Posterior cingulate gyrus (tissue), 11 donors: ENCODE measurements at regions of chr14 and their contacts with region 1.

Region 1: DNA sequence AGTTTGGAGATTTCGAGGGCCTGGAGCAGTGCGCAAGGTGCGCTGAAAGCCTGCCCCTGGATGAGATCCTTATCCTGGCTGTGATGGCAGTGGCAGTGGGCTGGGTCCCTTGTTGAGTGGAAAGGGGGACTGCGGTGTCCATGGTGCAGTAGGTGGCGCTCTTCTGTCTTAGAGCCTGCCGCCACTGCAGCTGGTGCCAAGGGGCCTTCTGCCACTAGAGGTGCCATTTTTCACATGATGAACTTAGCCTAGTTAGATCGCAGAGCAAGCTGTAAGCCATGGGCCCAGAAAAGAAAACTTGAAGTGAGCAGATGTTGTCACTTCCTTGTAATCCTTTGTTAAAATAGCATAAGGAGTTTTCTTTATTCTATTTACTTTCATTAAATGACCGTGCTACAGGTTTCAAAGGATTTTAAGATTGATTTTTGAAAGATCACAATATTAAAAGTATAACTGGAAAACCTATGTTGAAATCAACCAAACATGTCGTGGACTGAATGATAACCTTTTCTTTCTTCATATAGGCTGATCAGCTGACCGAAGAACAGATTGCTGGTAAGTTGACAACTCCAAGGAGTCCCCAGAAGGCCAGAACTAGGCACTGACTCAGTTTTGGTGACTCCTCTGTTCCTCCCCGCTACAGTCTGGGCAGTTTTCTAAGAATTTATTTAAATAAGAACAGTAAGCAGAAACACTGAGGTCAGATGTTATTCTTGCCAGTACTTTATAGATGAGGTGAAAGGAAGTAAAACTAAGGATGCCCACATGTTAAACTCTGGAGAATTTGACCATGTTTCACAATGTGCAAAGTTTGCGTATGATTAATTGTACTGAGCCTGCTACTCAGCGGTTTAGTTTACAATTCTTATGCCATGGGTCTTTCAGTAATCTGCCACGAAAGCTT is 3.0 kb downstream of the CALM1 start:
- DNase-seq: peak; percentile 84 to 98 (median 90)

Region 2: DNA sequence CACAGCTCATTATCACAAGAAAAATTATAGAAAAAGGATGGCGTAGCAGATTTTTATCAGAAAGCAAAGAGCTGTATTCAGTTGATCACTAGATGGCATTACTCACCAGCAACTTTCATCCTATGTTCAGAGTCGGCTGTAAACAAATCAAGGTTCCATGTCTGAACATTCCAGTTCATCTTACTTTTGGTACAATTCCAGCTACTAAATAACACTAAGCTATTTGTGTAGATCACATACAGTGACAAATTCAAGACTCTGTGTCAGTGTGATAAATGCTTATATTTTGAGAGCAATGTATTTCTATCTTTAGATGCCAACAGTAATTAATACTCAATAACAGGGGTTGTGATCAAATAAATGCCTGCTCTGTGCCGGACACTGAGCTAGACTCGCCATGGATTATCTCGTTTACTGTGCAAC is 98.1 kb before region 1 on chr14:
- intact Hi-C with region 1: loop called (anchors 5 kb)
- DNase-seq: no peak

Region 3: GRCh38 chr14:90383075-90383730 is 16.6 kb before region 1 on chr14:
- intact Hi-C with region 1: loop called (anchors 1 kb)
- DNase-seq: peak; percentile 98 to 100 (median 99)

Region 4: DNA sequence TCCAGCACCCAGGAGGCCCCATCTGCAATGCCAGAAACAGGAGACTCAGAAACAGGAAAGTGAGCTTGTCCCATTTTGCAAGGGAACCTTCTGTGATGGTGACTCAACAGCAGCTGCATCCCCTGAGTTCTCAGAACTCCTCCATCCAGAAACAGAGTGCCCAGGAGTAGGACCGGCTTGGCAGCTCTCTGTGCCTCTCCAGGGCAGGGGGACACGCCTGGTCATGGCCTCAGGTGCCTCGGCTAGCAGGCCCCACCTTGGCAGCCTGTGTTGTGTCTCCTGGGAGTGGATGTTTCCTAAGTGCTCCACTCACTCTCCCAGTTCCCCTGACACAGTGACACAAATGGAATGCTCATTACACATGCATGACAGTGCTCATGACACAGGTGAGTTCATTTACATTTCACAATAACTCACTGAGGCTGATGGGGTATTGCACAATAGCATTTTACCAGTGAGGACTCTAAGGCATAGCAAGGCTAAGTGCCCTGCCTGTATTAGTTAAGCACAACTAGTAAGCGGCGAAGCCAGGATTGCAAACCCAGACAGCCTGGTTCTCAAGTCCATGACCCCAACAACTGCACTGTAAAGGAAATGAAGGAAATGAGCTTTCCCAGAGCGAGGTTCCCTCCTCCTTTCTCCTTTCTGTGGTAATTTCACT is 44.4 kb after region 1 on chr14:
- intact Hi-C with region 1: no loop called
- DNase-seq: peak in 2 of 10 donors; percentile 15 to 64

Region 5: DNA sequence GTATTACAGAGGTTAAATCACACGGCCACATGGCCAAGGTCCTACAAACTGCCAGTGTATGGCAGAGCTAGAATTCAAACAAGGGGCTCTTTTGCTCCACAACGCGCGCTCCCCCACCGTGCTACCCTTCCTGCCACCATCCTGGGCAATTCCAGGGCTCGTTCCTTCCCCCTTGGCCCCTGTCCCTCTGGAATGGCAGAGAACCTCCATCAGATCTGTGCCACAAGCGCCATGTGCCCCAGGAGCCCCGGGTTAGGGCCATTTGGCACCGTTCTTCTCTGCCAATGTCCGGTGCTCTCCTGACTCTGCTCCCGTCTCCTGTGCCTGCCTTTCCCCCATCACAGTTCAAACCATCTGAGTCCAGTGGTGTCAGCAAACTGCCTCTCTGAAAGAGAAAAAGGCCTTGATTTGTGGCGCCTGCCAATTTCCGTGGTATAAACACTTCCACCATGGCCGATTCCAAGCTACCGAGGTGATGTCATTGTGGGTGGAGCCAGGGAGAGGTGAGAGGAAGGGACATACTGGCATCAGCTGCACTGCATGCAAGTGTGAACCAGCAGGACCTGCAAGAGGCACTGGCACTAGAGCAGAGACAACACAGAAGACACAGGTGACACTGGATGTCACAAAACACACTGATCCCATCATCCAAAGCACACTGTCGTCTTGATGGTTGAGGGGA is 160.2 kb after region 1 on chr14:
- intact Hi-C with region 1: loop called (anchors 5 kb)
- DNase-seq: peak in 3 of 10 donors; percentile 52 to 72 (median 72)

Region 6: GRCh38 chr14:90630171-90630806 is 230.5 kb after region 1 on chr14:
- intact Hi-C with region 1: no loop called
- DNase-seq: no peak

Region 7: DNA sequence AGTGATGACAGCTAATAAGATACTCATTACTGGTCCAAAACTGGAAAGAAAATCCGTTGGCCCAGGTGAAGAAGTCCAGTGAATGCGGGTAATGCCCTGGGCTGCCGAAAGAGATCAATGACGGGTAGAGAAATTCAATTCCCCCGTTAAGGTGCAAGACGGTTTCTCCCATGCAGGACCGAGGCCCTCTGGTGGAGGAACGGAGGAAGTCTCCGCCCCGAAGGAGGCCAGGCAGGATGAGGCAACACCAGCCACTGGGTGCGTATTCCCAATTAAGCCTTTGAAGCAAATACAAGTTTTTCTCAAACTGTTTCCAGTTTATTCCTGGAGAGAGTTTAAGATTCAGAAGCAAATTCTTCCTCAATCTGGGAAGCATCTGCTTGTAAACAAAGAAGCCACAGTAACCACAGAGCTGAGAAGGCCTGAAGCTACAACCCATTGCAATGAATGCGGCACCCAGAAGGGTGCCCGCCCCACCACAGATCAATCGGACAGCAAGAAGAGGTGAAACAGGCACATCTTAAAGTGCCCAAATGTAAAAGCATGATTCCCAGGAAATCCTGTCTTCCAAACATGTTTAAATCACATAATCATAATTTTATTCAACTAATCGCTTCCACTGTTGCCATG is 297.9 kb after region 1 on chr14:
- intact Hi-C with region 1: loop called (anchors 1 kb)
- DNase-seq: peak; percentile 82 to 98 (median 91)

Region 8: DNA sequence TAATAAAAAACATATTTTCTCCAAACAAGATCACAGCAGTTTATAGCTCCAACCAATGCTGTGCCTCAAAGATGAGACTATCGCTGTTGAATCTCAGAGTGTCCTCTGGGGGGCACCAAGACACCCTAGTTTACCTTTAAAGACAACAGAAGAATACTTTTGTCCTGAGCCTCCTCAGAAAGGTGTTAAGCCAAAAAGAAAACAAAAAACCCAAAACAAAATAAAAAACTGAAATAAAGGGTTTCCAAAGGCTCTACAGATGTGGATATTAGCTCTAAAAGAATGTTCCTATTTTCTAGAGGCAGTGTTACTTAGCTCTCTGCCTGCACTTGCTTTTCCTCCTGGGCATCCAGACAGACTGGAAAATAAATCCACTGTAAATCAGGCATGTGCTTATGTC is 503.3 kb after region 1 on chr14:
- intact Hi-C with region 1: loop called (anchors 2 kb)
- DNase-seq: peak in 6 of 10 donors; percentile 49 to 82 (median 61)